ENCODE measurements at regions of chr17 and their contacts with region 1.

Region 1: GRCh38 chr17:79707931-79708891 is 22.5 kb upstream of the ENPP7 start:
- DNase-seq: peak; percentile 43
- H3K4me3 Mint-ChIP-seq: no peak overlapping the region
- H3K27ac Mint-ChIP-seq: no peak overlapping the region
- H3K4me1 Mint-ChIP-seq: peaks cover 10% of the 10 kb centered on the region
- H3K27me3 Mint-ChIP-seq: peaks cover 10% of the 10 kb centered on the region
- CTCF ChIP-seq: peak; percentile 71

Region 2: GRCh38 chr17:79612468-79613194 is 95.6 kb before region 1 on chr17:
- CTCF ChIA-PET with region 1: no interaction called
- POLR2A ChIA-PET with region 1: no interaction called
- intact Hi-C with region 1: loop called (anchors 10 kb)
- DNase-seq: peak; percentile 64
- H3K4me3 Mint-ChIP-seq: no peak overlapping the region
- H3K27ac Mint-ChIP-seq: no peak overlapping the region
- H3K4me1 Mint-ChIP-seq: no peaks in the 10 kb centered on the region
- H3K27me3 Mint-ChIP-seq: peaks cover 83% of the 10 kb centered on the region
- CTCF ChIP-seq: peak; percentile 70

Region 3: GRCh38 chr17:79695797-79696609 is 12.2 kb before region 1 on chr17:
- CTCF ChIA-PET with region 1: interaction called, 11 read pairs
- POLR2A ChIA-PET with region 1: no interaction called
- intact Hi-C with region 1: no loop called
- DNase-seq: peak; percentile 38
- H3K4me3 Mint-ChIP-seq: no peak overlapping the region
- H3K27ac Mint-ChIP-seq: no peak overlapping the region
- H3K4me1 Mint-ChIP-seq: peaks cover 10% of the 10 kb centered on the region
- H3K27me3 Mint-ChIP-seq: peaks cover 37% of the 10 kb centered on the region
- CTCF ChIP-seq: no peak

Measured in MCF 10A (cell line).